Dendritic cell treated with granulocyte-macrophage colony-stimulating factor and Interleukin-4, amounts not matched to agents 40 ng/mL and 50 ng/mL, for 4 days (primary cell): ENCODE measurements at regions of chr5 and their contacts with region 1.

Region 1: DNA sequence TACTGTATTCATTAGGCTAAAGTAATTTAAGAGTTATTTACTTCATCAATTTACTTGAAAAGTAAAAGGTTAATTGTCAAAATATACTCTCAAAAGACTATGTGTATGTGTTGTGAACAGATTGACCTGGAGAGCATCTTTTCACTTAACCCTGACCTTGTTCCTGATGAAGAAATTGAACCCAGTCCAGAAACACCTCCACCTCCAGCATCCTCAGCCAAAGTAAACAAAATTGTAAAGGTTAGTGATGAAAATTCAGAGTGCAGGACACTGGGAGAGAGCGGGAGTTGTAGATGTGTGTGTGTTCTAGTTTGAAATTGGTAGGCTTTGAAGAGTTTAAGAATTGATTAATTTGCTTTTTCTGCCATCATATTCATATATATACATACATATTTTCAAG is 41.9 kb downstream of the KIF2A start:
- H3K4me3 Mint-ChIP-seq: no peak overlapping the region
- H3K27ac Mint-ChIP-seq: no peak overlapping the region
- H3K4me1 Mint-ChIP-seq: peaks cover 4% of the 10 kb centered on the region
- H3K27me3 Mint-ChIP-seq: no peaks in the 10 kb centered on the region

Region 2: GRCh38 chr5:62385131-62385530 is 37.2 kb after region 1 on chr5:
- intact Hi-C with region 1: loop called (anchors 5 kb)
- H3K4me3 Mint-ChIP-seq: no peak overlapping the region
- H3K27ac Mint-ChIP-seq: no peak overlapping the region
- H3K4me1 Mint-ChIP-seq: no peaks in the 10 kb centered on the region
- H3K27me3 Mint-ChIP-seq: no peaks in the 10 kb centered on the region

Region 3: GRCh38 chr5:62473209-62473608 is 125.3 kb after region 1 on chr5:
- intact Hi-C with region 1: no loop called
- H3K4me3 Mint-ChIP-seq: no peak overlapping the region
- H3K27ac Mint-ChIP-seq: no peak overlapping the region
- H3K4me1 Mint-ChIP-seq: peaks cover 5% of the 10 kb centered on the region
- H3K27me3 Mint-ChIP-seq: no peaks in the 10 kb centered on the region